SK-N-SH (cell line): ENCODE measurements at regions of chr2 and their contacts with region 1.

Region 1: GRCh38 chr2:219616550-219616949 is 10.9 kb upstream of the SLC4A3 start:
- DNase-seq: no peak
- H3K4me3 ChIP-seq: no peak overlapping the region
- H3K27ac ChIP-seq: no peak overlapping the region
- H3K4me1 ChIP-seq: peaks cover 0 to 8% of the 10 kb centered on the region in 2 experiments; a peak in 1 of 4 replicates
- H3K27me3 ChIP-seq: no peaks in the 10 kb centered on the region
- CTCF ChIP-seq: no peak
- EP300 ChIP-seq: no peak
- RAD21 ChIP-seq: no peak

Region 2: DNA sequence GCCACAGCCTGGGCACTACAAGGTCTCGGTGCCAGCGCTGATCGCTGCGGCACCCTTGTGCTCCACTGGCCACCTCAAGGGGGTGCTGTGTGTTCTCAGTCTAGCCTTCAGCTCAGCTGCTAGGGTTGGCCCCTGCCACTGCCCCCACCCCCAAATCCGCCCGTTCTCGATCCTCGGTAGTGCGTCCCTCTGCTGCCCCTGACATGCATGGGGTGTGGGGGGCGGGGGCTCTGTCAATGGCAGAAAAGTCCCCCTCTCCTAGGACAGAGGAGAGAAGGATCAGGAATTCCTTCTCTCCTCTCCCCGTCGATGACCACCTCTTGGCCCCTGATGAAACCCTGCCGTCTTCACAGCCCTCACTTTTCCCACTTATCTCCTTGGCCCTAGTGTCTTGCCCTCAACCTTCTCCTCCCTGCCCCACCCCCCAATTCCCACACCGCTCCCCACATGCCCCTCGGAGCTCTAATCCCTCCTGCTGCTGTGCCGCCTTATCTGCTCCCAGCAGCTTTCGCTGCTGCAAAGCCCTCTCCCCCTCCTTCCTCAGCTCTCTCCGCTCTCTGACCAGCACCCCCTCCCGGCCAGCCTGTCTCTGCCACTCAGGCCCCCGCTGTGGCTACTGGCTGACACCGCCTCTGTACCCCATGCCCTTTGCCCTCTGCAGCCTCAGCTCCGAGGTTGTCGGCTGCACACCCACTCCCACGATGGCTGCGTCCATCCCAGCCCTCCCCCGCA is 106.6 kb before region 1 on chr2:
- CTCF ChIA-PET with region 1: no interaction called
- POLR2A ChIA-PET with region 1: no interaction called
- DNase-seq: peak; percentile 83
- H3K4me3 ChIP-seq: peak overlapping the region; percentile 36 to 46; a peak in 3 of 4 replicates
- H3K27ac ChIP-seq: peak overlapping the region in 1 of 2 experiments; percentile 96; a peak in 2 of 4 replicates
- H3K4me1 ChIP-seq: peaks cover 3 to 99% of the 10 kb centered on the region in 2 experiments; a peak in 2 of 4 replicates
- H3K27me3 ChIP-seq: peaks cover 21% of the 10 kb centered on the region
- CTCF ChIP-seq: peak; percentile 76
- EP300 ChIP-seq: peak in 1 of 2 experiments; percentile 13; a peak in 1 of 4 replicates
- RAD21 ChIP-seq: peak; percentile 77

Region 3: GRCh38 chr2:219627103-219628100 is 10.9 kb after region 1 on chr2 and contains the start of gene SLC4A3:
- CTCF ChIA-PET with region 1: interaction called, 4 read pairs
- POLR2A ChIA-PET with region 1: interaction called, 11 read pairs
- DNase-seq: peak; percentile 94
- H3K4me3 ChIP-seq: peak within 1 kb of the TSS; percentile 64 to 68
- H3K27ac ChIP-seq: peak within 1 kb of the TSS in 1 of 2 experiments; percentile 68; a peak in 1 of 4 replicates
- H3K4me1 ChIP-seq: peaks cover 0 to 13% of the 10 kb centered on the region in 2 experiments; a peak in 1 of 4 replicates
- H3K27me3 ChIP-seq: no peaks in the 10 kb centered on the region
- CTCF ChIP-seq: 0 out of 2 replicates have a peak, but pooled peaks have one; percentile 14
- EP300 ChIP-seq: no peak
- RAD21 ChIP-seq: no peak
- polyA plus RNA-seq, gene SLC4A3: 12.2 and 12.3 TPM in 2 replicates